Activated CD8-positive, alpha-beta T cell treated with anti-CD3 and anti-CD28 coated beads, Interleukin-2, amount 10 ng/mL, durations not matched to agents 7 days and 5 days (primary cell): ENCODE measurements at regions of chr3 and their contacts with region 1.

Region 1: DNA sequence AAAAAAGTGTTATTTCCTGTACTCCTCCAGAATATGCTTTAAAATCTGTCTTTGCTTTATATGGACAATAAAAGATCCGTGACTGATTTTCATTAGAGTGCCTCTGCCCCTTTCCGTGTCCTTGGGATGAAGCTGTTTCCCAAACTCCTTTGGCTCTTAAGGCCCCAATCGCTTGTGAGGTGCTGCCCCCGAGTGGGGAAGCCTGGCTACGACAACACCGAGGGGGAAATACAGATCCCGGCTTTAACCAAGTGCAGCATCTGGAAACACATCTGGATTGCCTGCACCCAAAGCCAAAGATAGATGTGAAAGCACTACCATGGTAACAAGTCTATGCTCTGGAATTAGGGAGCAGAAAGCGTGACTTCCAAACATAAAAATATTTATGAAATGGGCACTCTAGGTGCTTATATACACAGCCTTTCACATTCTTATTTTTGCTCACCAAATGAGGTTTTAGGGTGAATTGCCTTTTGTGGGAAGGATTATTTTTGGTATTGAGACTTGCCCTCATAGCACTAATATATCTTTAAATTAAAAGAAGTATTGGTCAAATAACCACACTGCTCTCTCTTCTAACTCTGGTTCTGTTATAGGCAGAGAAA is 40.6 kb upstream of the ADCY5 start:
- DNase-seq: peak; percentile 63
- ATAC-seq: peak; percentile 53
- H3K4me3 Mint-ChIP-seq: no peak overlapping the region
- H3K27ac Mint-ChIP-seq: no peak overlapping the region
- H3K4me1 Mint-ChIP-seq: no peaks in the 10 kb centered on the region
- H3K27me3 Mint-ChIP-seq: no peaks in the 10 kb centered on the region

Region 2: DNA sequence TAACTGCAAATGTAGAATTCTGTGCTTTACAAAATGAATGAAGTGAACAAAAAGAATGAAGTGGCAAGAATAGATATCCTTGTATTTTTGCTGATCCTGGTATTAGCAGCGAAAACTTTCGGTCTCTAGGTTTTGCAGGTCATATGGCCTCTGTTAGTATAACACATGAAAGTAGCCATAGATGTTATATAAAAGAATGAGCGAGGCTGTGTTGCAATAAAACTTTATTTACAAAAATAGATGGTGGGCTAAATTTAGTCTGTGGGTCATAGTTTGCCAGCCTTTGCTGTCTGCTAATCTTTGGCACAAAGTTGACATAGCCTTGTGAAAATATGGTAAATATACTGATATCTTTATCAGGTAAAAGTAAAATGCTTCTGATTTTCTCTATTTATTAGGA is 252.6 kb before region 1 on chr3:
- CTCF ChIA-PET with region 1: no interaction called
- POLR2A ChIA-PET with region 1: no interaction called
- DNase-seq: no peak
- ATAC-seq: no peak
- H3K4me3 Mint-ChIP-seq: no peak overlapping the region
- H3K27ac Mint-ChIP-seq: no peak overlapping the region
- H3K4me1 Mint-ChIP-seq: peaks cover 9% of the 10 kb centered on the region
- H3K27me3 Mint-ChIP-seq: no peaks in the 10 kb centered on the region

Region 3: DNA sequence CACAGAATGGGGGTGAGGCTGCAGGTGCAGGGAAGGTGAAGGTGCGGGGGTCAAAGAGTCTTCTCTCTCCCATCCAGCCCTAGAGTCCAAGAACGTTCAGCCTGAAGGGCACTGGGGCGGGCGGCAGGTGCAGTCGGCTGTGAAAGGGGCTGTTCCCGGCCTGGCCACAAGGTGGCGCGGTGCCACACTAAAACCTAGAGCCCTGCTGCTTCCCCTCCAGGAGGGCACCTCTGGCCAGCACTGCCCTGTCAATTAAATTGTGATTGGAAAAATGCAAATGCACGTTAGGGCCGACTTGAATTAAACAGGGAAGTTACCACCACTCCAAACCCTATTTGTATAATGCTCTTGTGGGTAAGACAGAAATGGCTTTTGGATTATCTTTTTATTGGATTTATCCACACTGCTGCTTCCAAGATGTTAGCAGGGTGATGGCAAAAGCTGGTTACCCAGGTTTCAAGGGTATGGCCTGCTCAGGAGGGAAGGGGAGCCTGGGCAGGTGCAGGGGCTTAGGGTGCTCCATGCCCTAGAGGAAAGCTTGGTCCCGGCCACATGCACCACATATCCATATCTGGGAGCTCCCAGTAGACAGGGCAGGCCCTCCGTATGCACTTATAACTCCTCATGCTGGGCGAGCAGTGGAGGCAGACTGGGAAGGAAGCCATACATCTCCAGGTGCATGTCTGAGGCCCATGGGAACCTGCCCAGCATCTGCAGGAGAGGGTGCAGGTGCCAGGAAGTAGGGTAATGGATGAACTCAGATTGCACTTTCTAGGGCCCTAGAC is 160.5 kb before region 1 on chr3:
- CTCF ChIA-PET with region 1: interaction called, 23 read pairs
- POLR2A ChIA-PET with region 1: no interaction called
- DNase-seq: peak; percentile 81
- ATAC-seq: peak; percentile 85
- H3K4me3 Mint-ChIP-seq: no peak overlapping the region
- H3K27ac Mint-ChIP-seq: no peak overlapping the region
- H3K4me1 Mint-ChIP-seq: no peaks in the 10 kb centered on the region
- H3K27me3 Mint-ChIP-seq: peaks cover 9% of the 10 kb centered on the region

Region 4: DNA sequence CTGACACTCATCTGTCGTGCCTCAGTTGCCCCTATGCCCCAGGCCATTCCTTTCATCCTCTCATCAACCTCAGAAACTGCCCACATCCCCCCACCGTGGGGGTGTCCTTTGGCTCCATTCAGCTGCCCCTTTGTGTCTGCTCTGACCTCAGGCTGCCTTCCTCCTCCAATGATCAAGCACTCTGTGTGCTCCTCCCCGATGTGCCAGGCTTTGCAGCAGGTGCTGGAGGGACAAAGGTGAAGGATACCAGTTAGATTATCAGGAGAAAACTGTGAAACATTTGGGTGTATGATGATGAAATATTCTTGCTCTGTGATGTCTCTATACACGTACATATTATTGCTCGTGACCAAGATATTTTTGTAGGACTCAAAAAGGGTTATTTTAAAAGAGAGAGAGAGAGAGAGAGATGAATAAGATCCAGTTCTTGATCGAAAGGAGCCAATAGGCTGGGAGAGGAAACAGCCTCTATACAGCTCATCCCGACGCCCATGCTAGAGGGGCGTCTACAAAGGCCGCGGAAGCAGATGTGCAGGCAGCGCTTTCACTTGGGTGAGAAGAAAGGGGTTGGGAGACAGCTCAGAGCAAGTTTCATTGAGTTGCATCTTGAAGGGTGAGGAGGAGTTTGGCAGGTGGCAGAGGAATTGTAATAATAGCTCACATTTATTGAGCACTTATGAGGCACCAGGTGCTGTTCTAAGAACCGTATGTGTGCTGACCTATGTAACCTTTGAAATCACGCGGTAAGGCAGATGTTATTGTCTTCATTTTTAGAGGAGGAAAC is 12.3 kb before region 1 on chr3:
- CTCF ChIA-PET with region 1: no interaction called
- POLR2A ChIA-PET with region 1: no interaction called
- DNase-seq: no peak
- ATAC-seq: no peak
- H3K4me3 Mint-ChIP-seq: no peak overlapping the region
- H3K27ac Mint-ChIP-seq: no peak overlapping the region
- H3K4me1 Mint-ChIP-seq: no peaks in the 10 kb centered on the region
- H3K27me3 Mint-ChIP-seq: peaks cover 9% of the 10 kb centered on the region